A549 (cell line): ENCODE measurements at regions of chr14 and their contacts with region 1.

Region 1: DNA sequence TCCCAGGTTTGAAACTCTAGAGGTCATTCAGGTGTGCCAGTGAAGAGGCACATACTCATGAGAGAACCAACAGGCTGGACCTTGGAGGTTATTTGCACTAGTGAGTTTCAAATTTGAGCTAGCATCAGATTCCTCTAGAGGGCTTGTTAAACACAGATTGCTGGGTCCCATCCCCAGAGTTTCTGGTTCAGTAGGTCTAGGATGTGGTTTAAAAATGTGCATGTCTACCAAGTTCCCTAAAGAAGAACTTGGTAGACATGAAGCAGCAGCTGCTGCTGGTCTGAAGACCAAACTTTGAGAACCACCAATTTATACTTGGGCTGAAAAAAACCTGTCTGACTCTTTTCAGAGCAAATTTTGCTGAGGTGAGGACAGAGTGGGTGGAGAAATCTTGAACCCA is 61.7 kb downstream of the SUSD6 start:
- DNase-seq: no peak
- ATAC-seq: no peak
- H3K4me3 ChIP-seq: no peak overlapping the region
- H3K27ac ChIP-seq: no peak overlapping the region
- H3K4me1 ChIP-seq: no peaks in the 10 kb centered on the region
- CTCF ChIP-seq: no peak
- EP300 ChIP-seq: no peak
- POLR2A ChIP-seq: no peak
- RAD21 ChIP-seq: no peak

Region 2: DNA sequence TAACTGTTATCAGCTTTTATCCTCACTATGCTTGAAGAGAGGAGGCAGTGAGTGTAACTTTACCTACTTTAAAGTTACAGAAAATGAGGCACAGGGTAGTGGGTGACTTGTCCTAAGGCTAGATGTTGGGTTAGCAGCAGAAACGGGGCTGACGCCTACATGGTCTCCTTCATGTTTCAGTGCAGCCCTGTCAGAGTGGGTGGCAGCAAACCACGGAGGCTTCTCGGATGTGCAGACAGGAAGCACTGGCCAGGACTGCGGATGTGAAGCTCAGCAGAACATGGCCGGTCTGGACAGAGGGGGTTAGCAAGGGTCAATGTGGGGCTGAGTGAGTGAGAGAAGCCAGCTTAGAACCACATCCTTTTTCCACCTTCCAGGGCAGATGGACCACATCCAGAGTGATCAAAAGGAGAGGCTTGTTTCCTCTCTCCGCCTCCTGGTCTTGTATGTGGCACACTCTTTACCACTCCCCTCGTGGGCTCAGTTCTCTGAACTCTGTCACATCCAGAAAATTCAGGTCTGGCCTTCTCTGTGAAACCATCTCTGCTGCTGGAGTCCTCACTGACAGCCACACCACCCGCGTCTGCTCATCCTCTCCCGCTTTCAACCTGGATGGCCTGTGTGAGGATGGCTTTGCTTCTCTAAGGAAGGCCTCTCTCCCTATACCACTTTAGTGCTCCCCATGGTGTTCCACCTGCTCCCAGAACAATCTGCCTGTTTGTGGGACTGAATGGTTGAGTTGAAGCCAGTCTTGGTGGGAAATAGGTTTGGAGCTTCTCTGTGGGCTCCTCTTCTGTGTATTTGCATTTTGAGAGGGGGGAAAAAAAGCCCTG is 47.6 kb before region 1 on chr14:
- CTCF ChIA-PET with region 1: no interaction called
- POLR2A ChIA-PET with region 1: interaction called, 14 read pairs
- DNase-seq: no peak
- ATAC-seq: no peak; a peak in 1 of 6 replicates
- H3K4me3 ChIP-seq: no peak overlapping the region
- H3K27ac ChIP-seq: no peak overlapping the region
- H3K4me1 ChIP-seq: 0 out of 3 replicates have a peak, but pooled peaks cover 3% of the 10 kb centered on the region
- CTCF ChIP-seq: no peak
- EP300 ChIP-seq: no peak
- POLR2A ChIP-seq: no peak
- RAD21 ChIP-seq: no peak